Heart right ventricle (tissue), 16 donors: ENCODE measurements at regions of chr2 and their contacts with region 1.

Region 1: GRCh38 chr2:25664183-25664964 is 9.0 kb downstream of the DTNB start:
- DNase-seq: peak; percentile 11 to 59
- ATAC-seq: peak in 7 of 8 donors; percentile 64 to 88 (median 82)
- H3K4me3 ChIP-seq: no peak overlapping the region
- H3K27ac ChIP-seq: no peak overlapping the region
- H3K4me1 ChIP-seq: peaks cover 0 to 12% (median 7%) of the 10 kb centered on the region in 9 donors
- H3K27me3 ChIP-seq: no peaks in the 10 kb centered on the region
- CTCF ChIP-seq: peak; percentile 31 to 81 (median 70)

Region 2: GRCh38 chr2:25606892-25607291 is 57.5 kb before region 1 on chr2:
- intact Hi-C with region 1: loop called in 9 of 10 experiments (anchors 1 to 10 kb)
- DNase-seq: no peak
- ATAC-seq: peak in 1 of 8 donors; percentile 49
- H3K4me3 ChIP-seq: no peak overlapping the region
- H3K27ac ChIP-seq: no peak overlapping the region
- H3K4me1 ChIP-seq: no peaks in the 10 kb centered on the region
- H3K27me3 ChIP-seq: no peaks in the 10 kb centered on the region
- CTCF ChIP-seq: peak; percentile 22 to 80 (median 69)